ENCODE measurements at regions of chr18 and their contacts with region 1.

Region 1: DNA sequence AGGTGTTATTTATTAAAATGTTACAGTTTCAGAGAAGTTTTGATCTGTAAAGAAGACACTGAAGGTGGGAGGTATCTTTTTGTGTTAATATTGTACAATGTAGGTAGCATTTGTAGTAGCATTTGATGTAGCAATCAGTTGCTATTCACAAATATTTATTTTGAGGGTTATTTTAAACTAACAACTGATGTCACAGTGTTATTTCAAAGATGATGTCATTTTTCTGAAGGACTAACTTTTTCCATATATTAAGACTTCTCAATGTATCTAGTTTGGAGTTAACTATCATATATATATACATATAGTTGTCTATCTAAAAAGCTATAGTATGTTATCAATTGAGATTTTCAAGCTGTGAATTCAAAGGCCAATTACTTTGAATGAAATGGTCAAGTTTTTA is 1003.3 kb downstream of the DSC3 start:
- DNase-seq: no peak
- H3K4me3 ChIP-seq: no peak overlapping the region
- H3K27ac ChIP-seq: no peak overlapping the region
- H3K4me1 ChIP-seq: no peaks in the 10 kb centered on the region
- H3K27me3 ChIP-seq: no peaks in the 10 kb centered on the region
- CTCF ChIP-seq: no peak

Region 2: DNA sequence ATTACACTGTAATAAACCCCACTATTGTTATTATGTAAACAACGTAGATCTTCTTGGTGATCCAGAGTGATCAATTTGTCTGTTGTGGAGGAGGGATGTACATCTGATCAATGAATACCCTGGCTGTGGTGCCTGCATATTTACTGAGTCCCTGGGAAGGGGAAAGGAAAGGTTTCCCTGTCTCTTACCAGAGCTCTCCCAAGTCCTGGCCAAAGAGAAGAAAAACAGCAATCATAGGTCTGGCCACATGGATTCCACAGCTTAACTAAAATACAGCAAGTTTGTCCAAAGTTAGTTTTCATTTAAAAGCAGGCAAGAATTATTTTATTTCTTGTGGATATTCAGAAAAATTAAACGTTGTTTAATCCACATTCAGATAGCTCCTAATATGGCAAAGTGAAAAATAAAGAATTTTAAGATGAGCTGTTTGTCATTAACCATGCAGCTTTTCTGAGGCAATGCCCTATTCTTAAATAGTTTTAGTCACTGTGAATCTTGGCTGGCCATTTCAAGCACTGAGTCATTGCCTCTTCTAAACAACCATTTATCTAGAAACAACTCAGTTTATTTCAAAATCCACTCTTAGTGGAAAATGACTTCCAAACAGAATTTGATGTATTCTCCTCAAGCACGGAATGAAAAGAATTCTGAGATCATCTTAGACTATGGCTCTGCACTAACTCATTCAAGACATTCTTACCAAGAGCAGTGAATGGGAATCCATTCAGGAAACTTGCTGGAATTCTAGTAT is 857.9 kb before region 1 on chr18:
- intact Hi-C with region 1: loop called (anchors 10 kb)
- DNase-seq: no peak
- H3K4me3 ChIP-seq: no peak overlapping the region
- H3K27ac ChIP-seq: no peak overlapping the region
- H3K4me1 ChIP-seq: no peaks in the 10 kb centered on the region
- H3K27me3 ChIP-seq: no peaks in the 10 kb centered on the region
- CTCF ChIP-seq: no peak

Region 3: GRCh38 chr18:29693334-29693733 is 345.9 kb before region 1 on chr18:
- intact Hi-C with region 1: no loop called
- DNase-seq: no peak
- H3K4me3 ChIP-seq: no peak overlapping the region
- H3K27ac ChIP-seq: no peak overlapping the region
- H3K4me1 ChIP-seq: no peaks in the 10 kb centered on the region
- H3K27me3 ChIP-seq: no peaks in the 10 kb centered on the region
- CTCF ChIP-seq: no peak